Posterior vena cava (tissue), 2 donors: ENCODE measurements at regions of chr17 and their contacts with region 1.

Region 1: DNA sequence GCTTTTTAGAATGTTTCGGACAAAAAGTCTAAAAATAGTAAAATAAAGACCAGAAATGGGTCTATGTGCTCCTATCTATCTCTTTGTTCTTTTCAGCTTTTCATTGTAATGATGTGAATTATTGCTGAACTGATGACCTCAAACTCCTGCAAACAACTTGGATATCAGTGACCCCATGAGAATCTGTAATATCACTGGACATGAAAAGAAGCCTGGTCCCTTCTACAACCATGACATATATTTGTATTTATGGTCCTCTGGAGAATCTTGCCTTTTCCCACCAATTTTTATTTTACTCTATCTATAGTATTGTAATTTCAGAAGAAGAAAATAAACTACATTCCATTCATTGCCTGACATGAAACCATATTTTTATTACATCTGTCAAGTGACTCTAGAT is 740.7 kb upstream of the CA10 start:
- DNase-seq: no peak

Region 2: DNA sequence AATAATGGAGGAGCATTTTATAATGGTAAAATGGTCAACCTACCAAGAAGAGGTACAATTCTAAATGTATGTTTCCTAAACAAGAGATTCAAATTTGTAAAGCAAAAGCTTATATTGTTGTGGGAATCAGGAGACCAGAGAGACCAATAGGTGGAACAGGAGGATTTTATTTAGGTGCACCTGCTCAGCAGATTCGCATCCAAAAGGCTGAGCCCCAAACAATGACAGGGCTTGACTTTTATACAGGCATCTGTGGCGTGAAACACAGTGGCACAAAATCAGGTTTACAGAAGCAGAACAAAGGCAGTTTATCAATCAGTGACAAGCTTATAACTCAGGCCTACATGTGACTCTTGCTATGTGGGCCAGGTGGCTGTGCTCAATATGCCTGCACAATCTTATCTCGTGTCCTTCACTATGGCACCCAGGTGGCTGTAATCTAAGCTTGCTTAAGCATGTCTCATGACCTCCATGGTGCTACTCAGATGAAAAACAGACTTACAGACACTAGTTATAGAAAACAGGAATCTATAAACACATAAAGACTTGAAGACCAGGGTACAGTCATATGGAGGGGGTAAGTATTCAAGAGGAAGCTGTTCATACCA is 39.5 kb after region 1 on chr17:
- intact Hi-C with region 1: loop called in 1 of 2 experiments (anchors 1 kb)
- DNase-seq: no peak

Region 3: DNA sequence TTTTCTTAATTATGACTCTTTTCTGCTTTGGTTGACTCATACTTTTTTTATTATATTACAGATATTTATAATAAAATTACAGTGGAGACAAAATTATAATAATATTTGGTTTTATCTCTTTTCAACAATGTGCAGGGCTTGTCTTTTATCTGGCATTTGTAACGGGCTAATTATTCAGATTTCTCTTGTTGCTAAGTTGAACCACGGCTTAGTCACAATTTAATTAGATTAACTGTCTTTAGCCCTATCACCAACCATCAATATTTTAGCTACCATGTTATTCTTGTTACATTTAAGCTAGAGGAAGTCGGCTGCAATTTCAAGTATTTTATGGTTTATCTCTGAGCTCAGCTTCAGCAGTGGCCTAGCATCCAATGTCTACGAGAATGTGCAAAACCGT is 58.2 kb after region 1 on chr17:
- intact Hi-C with region 1: no loop called
- DNase-seq: no peak